ENCODE measurements at regions of chr16 and their contacts with region 1.

Region 1: GRCh38 chr16:72085002-72085401 is 8.4 kb downstream of the TXNL4B start:
- DNase-seq: no peak
- H3K4me3 ChIP-seq: no peak overlapping the region
- H3K27ac ChIP-seq: no peak overlapping the region
- H3K4me1 ChIP-seq: peaks cover 13% of the 10 kb centered on the region
- H3K27me3 ChIP-seq: no peaks in the 10 kb centered on the region
- CTCF ChIP-seq: no peak

Region 2: GRCh38 chr16:72051818-72052217 is 33.2 kb before region 1 on chr16:
- CTCF ChIA-PET with region 1: interaction called, 10 read pairs
- POLR2A ChIA-PET with region 1: no interaction called
- intact Hi-C with region 1: no loop called
- DNase-seq: no peak
- H3K4me3 ChIP-seq: no peak overlapping the region
- H3K27ac ChIP-seq: no peak overlapping the region
- H3K4me1 ChIP-seq: peaks cover 11% of the 10 kb centered on the region; the same call in 1 of the 2 replicates
- H3K27me3 ChIP-seq: peaks cover 21% of the 10 kb centered on the region
- CTCF ChIP-seq: no peak